Cardiac septum (tissue), 1 donor: ENCODE measurements at regions of chr3 and their contacts with region 1.

Region 1: GRCh38 chr3:179562591-179563270 is at the start of gene ACTL6A:
- DNase-seq: peak; percentile 100
- total RNA-seq, gene ACTL6A: 14.4 TPM

Region 2: DNA sequence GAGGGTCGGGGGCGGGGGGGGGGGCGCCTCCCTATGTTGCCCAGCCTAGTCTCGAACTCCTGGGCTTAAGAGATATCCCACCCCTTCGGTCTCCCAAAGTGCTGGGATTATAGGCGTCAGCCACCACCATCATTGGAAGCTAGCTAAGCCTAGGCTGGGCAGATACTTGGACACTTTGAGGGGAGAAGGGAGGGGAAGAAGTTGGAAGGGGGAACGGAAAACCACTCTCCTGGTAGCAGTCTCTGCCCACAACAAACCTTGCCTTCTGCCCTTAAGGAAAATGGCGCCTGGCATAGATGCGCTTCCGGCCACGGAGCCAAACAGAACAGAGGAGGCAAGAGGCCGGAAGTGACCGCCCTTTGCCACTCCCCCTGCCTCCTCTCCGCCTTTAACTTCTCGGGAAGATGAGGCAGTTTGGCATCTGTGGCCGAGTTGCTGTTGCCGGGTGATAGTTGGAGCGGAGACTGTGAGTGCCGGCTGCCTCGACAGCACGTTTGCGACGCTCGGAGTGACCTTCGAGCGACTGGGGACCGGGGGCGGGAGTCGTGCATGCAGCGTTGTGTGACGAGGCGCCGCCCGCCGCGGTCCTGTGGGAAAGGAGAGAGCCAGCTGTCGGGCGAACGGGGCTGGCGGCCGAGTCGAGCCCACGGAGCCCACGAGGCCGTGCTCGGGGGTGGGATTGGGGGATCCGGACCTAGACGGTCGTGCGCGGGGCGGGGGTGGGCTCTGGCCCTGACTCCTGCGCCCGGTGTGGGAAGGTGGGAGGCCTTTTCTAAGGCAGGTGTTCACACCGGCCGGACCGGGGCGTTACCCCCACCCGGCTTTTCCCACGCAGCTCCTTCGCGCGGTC is 215.2 kb before region 1 on chr3 and contains the start of gene MFN1:
- intact Hi-C with region 1: loop called (anchors 5 kb)
- DNase-seq: peak; percentile 97
- total RNA-seq, gene MFN1: 49.2 TPM

Region 3: GRCh38 chr3:179421500-179421899 is 141.2 kb before region 1 on chr3:
- intact Hi-C with region 1: loop called (anchors 2 kb)
- DNase-seq: no peak

Region 4: DNA sequence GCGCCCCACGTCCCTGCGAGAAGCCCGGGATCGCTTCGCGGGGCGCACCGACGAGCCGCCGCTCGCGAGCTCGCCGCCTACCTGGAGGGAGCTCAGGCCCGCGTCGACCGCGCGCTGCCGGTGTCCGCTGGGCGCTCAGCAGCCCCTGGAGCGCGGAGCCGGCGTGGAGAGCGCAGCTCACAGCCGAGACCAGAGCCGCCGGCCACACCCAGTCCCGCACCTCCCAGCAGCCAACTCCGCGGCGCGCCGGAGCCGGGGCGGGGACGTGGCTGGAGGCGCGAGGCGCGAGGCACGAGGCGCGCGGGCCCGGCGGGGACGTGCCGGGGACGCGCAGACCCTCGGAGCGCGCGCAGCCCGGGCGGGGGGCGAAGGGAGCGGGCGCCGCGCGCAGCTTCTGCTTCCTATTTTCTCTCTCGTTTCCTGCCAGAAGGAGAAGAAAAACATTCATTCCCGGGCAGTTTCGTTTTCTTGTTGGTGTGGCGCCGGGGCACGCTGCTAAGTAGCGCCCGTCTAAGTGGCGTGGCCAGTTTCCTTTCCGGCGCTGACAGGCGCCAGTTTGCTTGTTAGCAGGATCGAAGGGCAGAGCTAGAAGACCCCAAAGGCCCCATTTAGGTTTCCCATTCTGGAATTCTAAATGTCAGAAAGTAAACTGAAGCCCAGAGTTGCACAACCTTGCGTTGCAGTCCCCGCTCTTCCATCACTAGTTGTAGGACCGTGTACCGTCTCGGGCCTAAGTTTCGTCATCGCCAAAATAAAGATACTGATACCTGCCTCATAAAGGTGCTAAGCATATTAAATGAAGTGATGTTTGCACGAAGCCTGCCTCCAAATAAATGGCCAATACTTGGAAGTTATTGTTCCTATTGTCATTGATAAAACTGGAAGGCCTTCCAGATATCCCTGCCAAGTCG is 111.2 kb before region 1 on chr3 and contains the start of gene GNB4:
- intact Hi-C with region 1: loop called (anchors 10 kb)
- DNase-seq: peak; percentile 92
- total RNA-seq, gene GNB4: 14.7 TPM

Region 5: GRCh38 chr3:179591313-179591712 is 28.6 kb after region 1 on chr3:
- intact Hi-C with region 1: no loop called
- DNase-seq: no peak

Region 6: DNA sequence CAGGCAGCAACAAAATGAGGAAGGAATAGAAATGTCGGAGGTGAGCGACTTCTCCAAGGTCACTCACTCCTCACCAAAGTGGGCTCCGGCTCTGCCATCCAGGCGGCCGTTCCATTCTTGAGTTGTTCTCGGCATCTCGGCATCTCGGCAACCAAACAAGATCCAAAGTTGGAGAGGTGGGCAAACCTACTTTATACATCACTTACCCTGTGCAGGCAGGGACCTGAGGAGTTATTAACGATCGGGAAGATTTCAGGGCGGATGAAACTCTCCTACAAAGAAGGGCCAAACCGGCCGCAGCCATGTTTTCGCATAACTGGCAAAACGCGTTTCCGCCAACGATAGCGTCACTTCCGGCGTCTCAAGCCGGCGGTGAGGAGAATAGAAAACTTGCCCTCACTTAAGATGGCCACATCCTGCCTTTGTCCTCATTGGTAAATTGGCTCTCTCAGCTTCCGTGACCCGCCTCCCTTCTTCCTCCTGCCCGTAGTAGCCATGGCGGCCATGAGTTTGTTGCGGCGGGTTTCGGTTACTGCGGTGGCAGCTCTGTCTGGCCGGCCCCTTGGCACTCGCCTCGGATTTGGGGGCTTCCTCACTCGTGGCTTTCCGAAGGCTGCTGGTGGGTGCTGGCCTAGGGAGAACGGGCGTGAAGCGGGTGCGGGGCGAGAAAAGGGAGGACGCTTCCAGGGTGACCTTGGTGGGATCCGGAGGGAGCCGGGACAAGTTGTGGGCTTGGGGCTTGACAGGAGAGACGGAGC is 41.8 kb after region 1 on chr3 and contains the starts of genes MRPL47 and NDUFB5:
- intact Hi-C with region 1: loop called (anchors 5 kb)
- DNase-seq: peak; percentile 98
- total RNA-seq, gene MRPL47: 47.5 TPM
- total RNA-seq, gene NDUFB5: 258 TPM